ENCODE measurements at regions of chr21 and their contacts with region 1.

Region 1: GRCh38 chr21:40143822-40144525 is 276.7 kb downstream of the PCP4 start:
- DNase-seq: peak; percentile 41
- H3K4me3 ChIP-seq: no peak overlapping the region
- H3K27ac ChIP-seq: no peak overlapping the region
- H3K4me1 ChIP-seq: no peaks in the 10 kb centered on the region
- H3K27me3 ChIP-seq: no peaks in the 10 kb centered on the region
- CTCF ChIP-seq: peak; percentile 68 to 78 (median 71)
- EP300 ChIP-seq: no peak
- POLR2A ChIP-seq: no peak

Region 2: DNA sequence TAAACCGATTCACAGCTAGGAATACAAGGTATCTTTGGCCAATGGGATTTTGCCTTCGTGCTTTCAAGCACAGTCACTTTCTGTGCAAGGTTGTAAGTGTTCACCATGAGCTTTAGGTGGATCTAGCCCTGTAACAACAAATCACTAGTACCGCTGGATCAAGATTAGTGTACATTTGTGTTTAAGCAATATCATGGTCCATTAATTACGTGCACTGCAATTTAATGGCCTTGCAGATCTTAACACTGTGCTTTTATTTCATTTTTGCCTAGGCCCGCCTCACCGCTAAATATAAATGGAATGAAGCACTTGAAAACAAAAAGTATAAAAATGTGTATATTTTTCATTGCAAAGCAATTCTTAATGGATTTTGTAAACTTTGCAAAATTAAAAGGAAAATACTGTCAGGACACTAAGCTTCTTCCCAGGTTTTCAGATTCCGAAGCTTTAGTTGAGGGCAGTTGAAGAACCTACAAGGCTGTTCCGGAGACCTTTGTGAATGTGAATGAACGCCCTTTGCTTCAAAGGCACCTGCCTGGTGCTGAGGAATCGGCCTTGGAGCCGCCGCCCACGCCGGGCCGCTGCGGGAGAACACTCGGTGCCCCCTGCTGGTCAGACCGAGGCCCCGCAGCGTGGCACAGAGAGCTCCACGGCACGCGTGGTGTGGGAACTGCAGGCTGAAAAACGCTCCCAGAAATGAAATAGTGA is 242.1 kb after region 1 on chr21:
- in situ Hi-C with region 1: loop called in 1 of 4 experiments (anchors 25 kb)
- intact Hi-C with region 1: no loop called
- DNase-seq: peak; percentile 34
- H3K4me3 ChIP-seq: no peak overlapping the region
- H3K27ac ChIP-seq: no peak overlapping the region
- H3K4me1 ChIP-seq: no peaks in the 10 kb centered on the region
- H3K27me3 ChIP-seq: peaks cover 3% of the 10 kb centered on the region
- CTCF ChIP-seq: peak; percentile 51 to 79 (median 66)
- EP300 ChIP-seq: no peak
- POLR2A ChIP-seq: no peak